Activated T-helper 1 cell treated with anti-CD3 and anti-CD28 coated beads, Interleukin-12 subunit alpha, Interleukin-12 subunit beta, Interleukin-2, Interleukin-4 antibody, amounts not matched to agents 30 ng/mL and 10 ng/mL and 1 ng/mL, durations not matched to agents 14 hours and 24 hours and 36 hours (primary cell): ENCODE measurements at regions of chr10 and their contacts with region 1.

Region 1: GRCh38 chr10:38094158-38094920 is at the start of gene ZNF37A:
- DNase-seq: peak; percentile 88
- H3K4me3 Mint-ChIP-seq: peak within 1 kb of the TSS; percentile 87
- H3K27ac Mint-ChIP-seq: peak within 1 kb of the TSS; percentile 75
- H3K4me1 Mint-ChIP-seq: peaks cover 26% of the 10 kb centered on the region
- H3K27me3 Mint-ChIP-seq: no peaks in the 10 kb centered on the region
- total RNA-seq, gene ZNF37A: 29.3 and 30.3 TPM in 2 replicates

Region 2: GRCh38 chr10:37857287-37858211 is 236.8 kb before region 1 on chr10 and contains the start of gene ZNF248:
- intact Hi-C with region 1: loop called (anchors 1 kb)
- DNase-seq: peak; percentile 94
- H3K4me3 Mint-ChIP-seq: peak within 1 kb of the TSS; percentile 89
- H3K27ac Mint-ChIP-seq: peak within 1 kb of the TSS; percentile 95
- H3K4me1 Mint-ChIP-seq: peaks cover 30% of the 10 kb centered on the region
- H3K27me3 Mint-ChIP-seq: no peaks in the 10 kb centered on the region
- total RNA-seq, gene ZNF248: 7.7 and 7.9 TPM in 2 replicates

Region 3: DNA sequence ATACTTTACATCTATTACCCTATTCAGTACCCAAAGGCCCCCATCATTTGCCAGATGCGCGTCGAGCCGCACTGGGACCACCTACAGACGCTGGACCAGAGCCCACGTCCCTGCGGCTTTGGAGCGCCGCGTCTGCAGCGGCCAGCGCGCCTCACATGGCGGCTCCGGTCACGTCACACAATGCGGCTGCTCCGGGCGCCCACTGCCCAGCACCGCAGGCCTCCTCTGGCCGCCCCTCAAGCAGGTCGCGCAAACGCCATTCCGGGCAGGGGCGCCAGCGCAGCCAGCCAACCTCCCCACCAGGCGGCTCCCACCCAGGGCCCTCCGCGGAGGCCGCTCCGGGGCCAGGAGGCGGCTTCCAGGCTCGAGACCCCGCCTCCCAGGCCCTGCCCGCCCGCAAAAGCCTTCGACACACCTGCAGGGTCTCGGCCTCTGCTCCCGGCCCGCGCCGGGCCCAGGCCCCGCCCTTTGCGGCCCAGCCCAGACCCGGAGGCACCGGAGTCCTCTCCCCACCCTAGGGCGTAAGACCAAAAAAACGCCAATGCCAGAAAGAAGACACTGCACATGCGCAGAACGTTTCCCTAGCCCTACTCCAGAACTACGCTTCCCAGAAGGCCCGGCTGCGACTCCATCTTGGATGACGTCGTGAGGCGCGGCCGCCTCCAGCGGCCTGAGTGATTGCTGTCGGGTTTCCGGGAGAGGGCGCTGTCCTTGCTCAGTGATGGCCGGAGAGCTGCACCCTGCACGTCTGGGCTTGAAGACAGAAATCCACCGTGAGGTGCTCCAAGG is 118.1 kb before region 1 on chr10 and contains the start of gene ZNF25:
- intact Hi-C with region 1: loop called (anchors 1 kb)
- DNase-seq: peak; percentile 95
- H3K4me3 Mint-ChIP-seq: peak within 1 kb of the TSS; percentile 91
- H3K27ac Mint-ChIP-seq: peak within 1 kb of the TSS; percentile 95
- H3K4me1 Mint-ChIP-seq: peaks cover 31% of the 10 kb centered on the region
- H3K27me3 Mint-ChIP-seq: no peaks in the 10 kb centered on the region
- total RNA-seq, gene ZNF25: 6.4 and 8.1 TPM in 2 replicates

Region 4: DNA sequence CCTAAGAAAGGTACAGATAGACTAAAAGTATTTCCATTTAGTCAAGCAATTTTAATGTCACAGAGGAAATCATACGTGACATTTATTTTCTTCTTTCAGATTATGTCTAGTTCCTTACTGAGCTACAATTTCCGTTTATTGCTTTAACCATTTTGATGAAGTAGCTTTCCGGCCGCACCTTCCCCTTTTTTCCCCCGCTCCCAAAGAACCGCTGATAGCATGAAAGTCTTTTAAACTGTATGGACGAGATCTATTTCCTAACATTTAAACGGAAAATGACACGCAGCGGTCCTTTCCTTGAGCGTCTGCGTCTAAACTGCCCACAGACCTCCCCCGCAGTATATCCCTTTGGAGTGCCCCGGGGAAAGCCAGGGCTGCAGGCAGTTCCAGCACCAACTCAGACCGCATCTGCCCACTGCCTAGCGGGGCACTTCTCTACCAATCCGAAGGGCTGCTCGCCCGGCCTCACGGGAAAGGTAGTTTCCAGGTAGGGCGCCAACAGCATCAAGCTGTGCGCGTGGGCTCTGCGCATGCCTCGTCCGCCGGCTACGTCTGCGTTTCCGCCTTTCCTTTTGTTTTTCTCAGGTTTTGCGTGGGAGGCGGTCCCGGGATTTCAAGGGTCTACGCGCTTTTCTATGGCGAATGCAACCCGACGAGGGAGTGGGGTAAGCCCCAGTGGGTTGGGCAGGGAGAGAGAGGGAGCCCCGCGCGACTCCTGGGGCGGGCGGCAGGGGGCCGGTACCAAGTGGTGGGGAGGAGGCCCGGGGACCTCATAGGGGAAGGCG is 84.0 kb before region 1 on chr10 and contains the start of gene ZNF33A:
- intact Hi-C with region 1: loop called (anchors 1 kb)
- DNase-seq: peak; percentile 85
- H3K4me3 Mint-ChIP-seq: peak within 1 kb of the TSS; percentile 84
- H3K27ac Mint-ChIP-seq: peak within 1 kb of the TSS; percentile 91
- H3K4me1 Mint-ChIP-seq: peaks cover 38% of the 10 kb centered on the region
- H3K27me3 Mint-ChIP-seq: no peaks in the 10 kb centered on the region
- total RNA-seq, gene ZNF33A: 15.5 and 17.2 TPM in 2 replicates

Region 5: GRCh38 chr10:38038107-38038931 is 56.0 kb before region 1 on chr10:
- intact Hi-C with region 1: loop called (anchors 1 kb)
- DNase-seq: no peak
- H3K4me3 Mint-ChIP-seq: peak overlapping the region; percentile 86
- H3K27ac Mint-ChIP-seq: peak overlapping the region; percentile 91
- H3K4me1 Mint-ChIP-seq: peaks cover 20% of the 10 kb centered on the region
- H3K27me3 Mint-ChIP-seq: no peaks in the 10 kb centered on the region

Region 6: GRCh38 chr10:38143587-38143986 is 49.2 kb after region 1 on chr10:
- intact Hi-C with region 1: no loop called
- DNase-seq: no peak
- H3K4me3 Mint-ChIP-seq: no peak overlapping the region
- H3K27ac Mint-ChIP-seq: no peak overlapping the region
- H3K4me1 Mint-ChIP-seq: no peaks in the 10 kb centered on the region
- H3K27me3 Mint-ChIP-seq: no peaks in the 10 kb centered on the region